Gastrocnemius medialis (tissue), 4 donors: ENCODE measurements at regions of chr18 and their contacts with region 1.

Region 1: GRCh38 chr18:23515911-23516546 is 12.7 kb downstream of the RMC1 start:
- DNase-seq: peak; percentile 22 to 54
- ATAC-seq: peak; percentile 86 to 93
- H3K4me3 ChIP-seq: no peak overlapping the region
- H3K27ac ChIP-seq: no peak overlapping the region
- H3K4me1 ChIP-seq: no peaks in the 10 kb centered on the region
- H3K27me3 ChIP-seq: no peaks in the 10 kb centered on the region
- CTCF ChIP-seq: peak; percentile 56 to 88 (median 75)
- POLR2A ChIP-seq: no peak

Region 2: GRCh38 chr18:23580677-23581367 is 64.8 kb after region 1 on chr18:
- in situ Hi-C with region 1: loop called (anchors 5 to 10 kb)
- intact Hi-C with region 1: no loop called
- DNase-seq: no peak
- ATAC-seq: no peak
- H3K4me3 ChIP-seq: no peak overlapping the region
- H3K27ac ChIP-seq: no peak overlapping the region
- H3K4me1 ChIP-seq: peaks cover 20 to 22% of the 10 kb centered on the region in 2 donors
- H3K27me3 ChIP-seq: no peaks in the 10 kb centered on the region
- CTCF ChIP-seq: no peak
- POLR2A ChIP-seq: no peak

Region 3: DNA sequence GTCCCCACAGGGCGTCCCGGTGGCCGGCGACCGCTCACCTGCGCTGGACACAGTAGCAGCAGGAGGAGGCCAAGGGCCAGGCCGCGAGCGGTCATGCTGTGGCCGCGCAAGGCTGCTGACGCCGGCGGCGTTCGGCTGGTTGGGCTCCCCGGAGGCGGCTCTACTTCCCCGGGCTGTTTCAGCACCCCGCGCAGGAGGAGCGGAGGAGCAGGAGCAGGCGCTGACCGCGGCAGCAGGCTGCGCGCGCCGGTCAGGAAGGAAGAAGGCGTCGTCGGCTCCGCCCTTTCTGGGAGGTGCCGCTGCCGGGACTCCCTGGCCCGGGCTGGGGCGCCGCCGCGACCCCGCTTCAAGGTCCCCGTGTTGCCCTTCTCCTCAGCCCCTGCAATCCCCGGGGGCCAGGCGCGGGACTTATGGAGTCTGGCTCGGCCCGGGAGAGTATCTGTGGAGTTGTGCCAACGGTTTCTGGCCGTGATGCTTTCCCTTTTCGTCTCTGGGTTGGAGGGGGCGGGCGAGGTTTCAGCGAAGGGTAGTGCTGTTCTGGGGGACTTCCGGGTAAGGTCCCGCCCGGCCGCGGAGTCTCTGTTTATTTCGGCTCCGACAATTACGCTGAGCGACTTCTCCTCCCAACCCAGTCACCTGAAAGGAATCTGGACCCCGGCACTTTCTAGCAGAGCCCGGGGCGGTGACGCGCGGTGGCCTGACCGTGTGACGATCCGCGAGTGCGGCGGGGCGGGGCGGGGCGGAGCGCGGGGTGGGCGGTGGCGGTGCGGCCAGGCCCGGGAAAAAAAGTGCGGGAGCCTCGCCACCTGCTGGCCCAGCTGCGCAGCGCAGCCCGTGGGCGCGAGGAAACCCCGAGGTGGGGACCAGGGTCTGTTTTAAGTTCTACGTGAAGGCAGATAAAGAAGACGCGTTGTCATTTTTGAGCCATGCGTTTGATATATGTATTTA is 70.5 kb after region 1 on chr18 and contains the start of gene NPC1:
- in situ Hi-C with region 1: loop called (anchors 5 to 10 kb)
- intact Hi-C with region 1: loop called (anchors 1 kb)
- DNase-seq: peak; percentile 87 to 89
- ATAC-seq: peak; percentile 91 to 93
- H3K4me3 ChIP-seq: peak within 1 kb of the TSS; percentile 77 to 97 (median 90)
- H3K27ac ChIP-seq: peak within 1 kb of the TSS; percentile 95 to 99 (median 97)
- H3K4me1 ChIP-seq: peaks cover 20 to 22% of the 10 kb centered on the region in 2 donors
- H3K27me3 ChIP-seq: no peaks in the 10 kb centered on the region
- CTCF ChIP-seq: peak; percentile 68 to 97 (median 90)
- POLR2A ChIP-seq: peak; percentile 94
- total RNA-seq, gene NPC1: 35.7 to 99.4 (median 46.2) TPM